Right ventricle myocardium superior (tissue), 1 donor: ENCODE measurements at regions of chr10 and their contacts with region 1.

Region 1: GRCh38 chr10:124741281-124741921 is 2.8 kb downstream of the FAM53B start:
- DNase-seq: peak; percentile 89
- ATAC-seq: peak; percentile 66

Region 2: DNA sequence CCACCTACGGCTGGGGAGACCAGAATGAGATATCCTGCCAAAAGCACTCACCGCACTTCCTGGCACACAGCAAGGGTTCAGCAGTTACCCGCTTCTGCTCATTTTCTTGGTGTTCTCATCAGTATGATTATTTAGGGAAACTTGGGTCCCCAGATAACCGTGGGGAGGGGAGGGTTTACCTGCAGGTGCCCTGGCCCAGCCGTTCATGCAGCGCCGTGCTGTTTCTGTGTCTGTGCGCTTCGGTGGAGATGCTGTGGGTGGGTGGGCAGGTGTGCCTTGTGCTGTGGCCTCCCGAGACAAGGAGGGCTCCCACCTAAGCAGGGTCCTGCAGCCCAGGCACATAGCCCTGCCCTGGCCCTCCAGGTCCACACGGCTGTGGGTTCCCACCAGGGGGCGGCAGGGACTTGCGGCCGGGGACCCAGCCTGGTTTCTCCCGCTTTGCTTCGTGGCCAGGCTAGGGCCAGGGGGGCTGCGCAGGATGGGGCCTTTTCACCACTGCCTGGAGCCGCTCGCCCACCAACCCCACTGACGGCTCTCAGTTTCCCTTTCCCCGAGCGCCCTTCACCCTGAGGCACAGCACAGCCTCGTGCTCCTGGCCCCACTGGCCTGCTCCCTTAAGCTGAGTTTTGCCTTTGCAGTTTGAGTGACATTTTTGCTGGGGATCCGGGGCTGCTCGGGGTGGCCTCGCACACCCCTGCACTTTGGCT is 201.3 kb before region 1 on chr10:
- intact Hi-C with region 1: loop called (anchors 2 kb)
- DNase-seq: peak; percentile 86
- ATAC-seq: peak; percentile 93

Region 3: DNA sequence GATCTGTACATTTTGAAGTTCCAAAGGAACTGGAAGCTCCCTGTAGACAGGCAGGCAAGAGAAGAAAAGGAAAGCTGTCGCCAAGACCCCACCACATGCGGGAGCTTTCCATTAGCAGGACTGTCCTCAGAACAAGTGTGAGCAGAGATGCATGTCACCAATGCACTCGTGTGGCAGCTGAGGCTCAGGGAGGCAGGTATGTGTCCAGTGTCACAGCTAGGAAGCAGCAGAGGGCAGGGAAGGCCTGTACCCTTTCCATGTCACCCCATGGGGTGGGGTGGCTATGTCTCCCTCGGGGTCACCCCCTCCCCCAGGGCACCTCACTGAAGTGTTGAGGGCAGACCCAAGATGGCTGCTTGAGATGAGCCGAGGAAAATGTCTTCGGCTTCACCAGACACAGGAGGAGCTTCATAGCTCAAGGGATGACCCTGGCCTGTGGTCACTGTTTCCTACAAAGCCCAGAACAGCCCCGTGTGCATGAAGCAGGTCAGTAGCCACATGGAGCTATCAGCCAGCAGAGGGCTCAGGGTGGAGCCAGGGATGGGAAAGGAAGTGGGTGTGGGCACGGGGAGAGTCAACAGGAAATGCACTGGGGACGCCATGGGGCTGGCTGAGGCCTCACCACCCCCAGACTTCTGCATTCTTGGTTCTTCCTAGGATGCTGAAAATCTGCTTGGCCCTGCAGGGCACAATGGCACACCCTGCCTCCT is 93.8 kb before region 1 on chr10:
- intact Hi-C with region 1: loop called (anchors 5 kb)
- DNase-seq: peak; percentile 87
- ATAC-seq: peak; percentile 40

Region 4: GRCh38 chr10:124701435-124701834 is 40.0 kb before region 1 on chr10:
- intact Hi-C with region 1: loop called (anchors 2 kb)
- DNase-seq: peak; percentile 96
- ATAC-seq: peak; percentile 80